ENCODE measurements at regions of chr9 and their contacts with region 1.

Region 1: DNA sequence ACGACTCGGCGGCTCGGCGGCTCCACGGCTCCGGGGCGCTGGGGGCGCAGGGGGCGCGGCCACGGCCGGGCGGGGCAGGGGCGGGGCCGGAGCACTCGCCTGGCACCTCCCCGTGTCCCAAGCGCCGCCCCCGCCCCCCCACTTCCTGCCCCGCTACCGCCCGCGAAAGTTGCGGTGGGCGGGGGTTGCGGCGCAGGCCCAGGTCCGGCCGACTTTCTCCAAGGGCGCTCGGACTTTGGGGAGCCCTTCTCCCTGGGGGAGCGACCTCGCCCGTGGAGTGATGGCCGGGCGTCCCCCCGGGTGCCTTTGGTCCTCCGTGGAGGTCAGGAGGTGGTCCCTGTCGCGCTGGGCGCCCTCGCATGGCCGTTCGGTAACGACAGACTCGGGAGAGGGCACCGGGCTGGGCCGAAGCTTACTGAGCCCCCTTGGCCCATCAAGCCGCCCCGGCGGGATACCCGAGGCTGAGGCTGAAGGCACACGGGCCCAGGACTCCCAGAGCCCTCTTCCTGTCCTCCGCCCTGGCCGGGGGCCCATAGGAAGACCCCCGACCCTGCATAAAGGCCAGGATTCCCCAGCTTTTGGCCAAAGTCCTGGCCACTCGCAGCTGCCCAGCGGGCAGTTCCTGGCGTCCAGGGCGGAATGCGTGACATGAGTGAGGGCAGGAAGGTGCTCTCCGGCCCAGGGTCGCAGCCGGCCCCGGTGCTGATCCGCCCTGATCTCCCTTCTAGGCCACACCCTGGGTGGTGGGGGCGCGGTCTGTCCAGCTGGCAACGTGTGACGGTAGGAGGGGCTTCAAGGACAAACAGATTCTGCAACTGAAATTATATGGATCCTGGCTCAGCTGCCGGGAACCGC is 883 bp upstream of the VAV2 start:
- DNase-seq: peak; percentile 95
- H3K4me3 ChIP-seq: peak overlapping the region; percentile 85
- H3K27ac ChIP-seq: peak overlapping the region; percentile 89
- H3K4me1 ChIP-seq: peaks cover 7% of the 10 kb centered on the region; the same call in 1 of the 2 replicates
- H3K27me3 ChIP-seq: no peaks in the 10 kb centered on the region

Region 2: DNA sequence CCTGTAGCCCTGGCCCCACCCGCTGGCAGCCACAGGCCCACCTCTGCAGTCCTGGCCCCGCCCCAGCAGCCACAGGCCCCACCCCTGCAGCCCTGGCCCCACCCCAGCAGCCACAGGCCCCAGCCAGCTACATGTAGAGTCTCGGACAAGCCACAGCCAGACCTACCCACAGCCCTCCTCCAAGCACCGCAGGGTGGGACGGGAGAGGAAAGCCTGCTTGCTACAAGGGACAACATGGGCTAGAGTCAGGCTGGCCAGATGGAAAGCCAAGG is 205.3 kb before region 1 on chr9:
- in situ Hi-C with region 1: loop called (anchors 5 kb)
- DNase-seq: peak; percentile 15
- H3K4me3 ChIP-seq: no peak overlapping the region
- H3K27ac ChIP-seq: no peak overlapping the region
- H3K4me1 ChIP-seq: no peaks in the 10 kb centered on the region
- H3K27me3 ChIP-seq: no peaks in the 10 kb centered on the region